ENCODE measurements at regions of chr13 and their contacts with region 1.

Region 1: DNA sequence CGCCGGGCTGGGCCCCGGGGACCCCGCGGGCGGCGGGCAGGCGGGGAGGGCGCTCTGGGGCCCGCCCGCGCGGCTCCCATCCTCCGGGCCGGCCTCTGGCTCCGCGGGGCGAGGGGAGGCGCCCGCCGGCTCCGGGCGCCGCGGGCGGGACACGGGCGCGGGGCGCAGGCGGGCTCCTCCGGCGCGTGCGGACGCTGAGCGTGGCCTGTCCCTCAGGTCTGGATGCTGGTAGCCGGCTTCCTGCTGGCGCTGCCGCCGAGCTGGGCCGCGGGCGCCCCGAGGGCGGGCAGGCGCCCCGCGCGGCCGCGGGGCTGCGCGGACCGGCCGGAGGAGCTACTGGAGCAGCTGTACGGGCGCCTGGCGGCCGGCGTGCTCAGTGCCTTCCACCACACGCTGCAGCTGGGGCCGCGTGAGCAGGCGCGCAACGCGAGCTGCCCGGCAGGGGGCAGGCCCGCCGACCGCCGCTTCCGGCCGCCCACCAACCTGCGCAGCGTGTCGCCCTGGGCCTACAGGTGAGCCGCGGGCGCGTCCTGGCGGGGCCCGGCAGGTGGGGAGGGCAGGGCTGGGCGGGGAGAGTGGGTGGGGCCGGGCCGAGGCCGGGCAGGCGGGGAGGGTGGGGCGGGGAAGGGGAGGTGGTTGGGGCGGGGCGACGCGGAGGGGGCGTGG is 414 bp downstream of the IL17D start:
- DNase-seq: peak; percentile 72
- ATAC-seq: peak; percentile 93
- H3K4me3 Mint-ChIP-seq: no peak overlapping the region
- H3K27ac Mint-ChIP-seq: no peak overlapping the region
- H3K4me1 Mint-ChIP-seq: peaks cover 14% of the 10 kb centered on the region
- H3K27me3 Mint-ChIP-seq: peaks cover 19% of the 10 kb centered on the region
- CTCF ChIP-seq: no peak

Region 2: DNA sequence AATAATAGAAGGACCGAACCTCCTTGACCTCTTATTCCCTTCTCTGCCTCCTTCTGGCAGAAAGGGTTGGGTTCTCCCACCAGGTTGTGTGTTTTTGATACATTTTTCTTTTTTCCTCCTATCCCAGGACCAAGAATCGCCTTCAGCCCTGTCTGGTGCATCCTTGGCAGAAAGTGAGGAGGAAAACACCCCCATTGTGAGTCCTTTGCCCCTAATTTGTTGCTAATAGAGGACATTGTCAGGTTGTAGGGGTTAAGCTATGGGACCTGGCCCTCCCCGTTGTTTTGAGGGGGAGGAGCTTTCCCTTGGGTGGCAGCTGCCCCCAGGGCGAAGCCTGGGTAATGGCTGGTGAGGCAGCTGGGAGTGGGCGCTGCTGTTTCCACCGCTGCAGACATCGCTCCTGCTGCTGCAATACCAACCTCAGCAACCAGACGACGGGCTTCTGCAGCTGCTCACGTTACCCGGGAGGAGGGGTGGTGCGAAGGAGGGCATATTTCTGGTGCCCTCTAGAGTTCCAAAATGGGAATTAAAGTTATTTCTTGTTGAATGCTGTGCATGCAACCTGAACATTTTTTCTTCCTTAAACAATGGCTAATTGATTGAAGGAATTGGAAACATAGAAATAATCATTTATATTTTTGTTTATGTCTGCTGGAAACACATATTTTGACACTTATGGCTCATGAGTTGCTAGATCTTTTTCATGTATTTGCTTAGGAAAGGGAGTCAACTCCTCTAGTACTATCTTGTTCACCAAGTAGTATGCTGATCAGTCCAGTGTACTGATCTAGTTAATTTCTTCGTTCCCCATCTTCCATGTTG is 743.9 kb before region 1 on chr13:
- CTCF ChIA-PET with region 1: no interaction called
- POLR2A ChIA-PET with region 1: no interaction called
- intact Hi-C with region 1: loop called (anchors 10 kb)
- DNase-seq: peak; percentile 60
- ATAC-seq: peak; percentile 43
- H3K4me3 Mint-ChIP-seq: peak overlapping the region; percentile 98
- H3K27ac Mint-ChIP-seq: peak overlapping the region; percentile 98
- H3K4me1 Mint-ChIP-seq: peaks cover 33% of the 10 kb centered on the region
- H3K27me3 Mint-ChIP-seq: no peaks in the 10 kb centered on the region
- CTCF ChIP-seq: no peak

Region 3: GRCh38 chr13:20525690-20526544 is 178.0 kb before region 1 on chr13 and contains the start of gene CRYL1:
- CTCF ChIA-PET with region 1: no interaction called
- POLR2A ChIA-PET with region 1: no interaction called
- intact Hi-C with region 1: loop called (anchors 1 kb)
- DNase-seq: peak; percentile 69
- ATAC-seq: peak; percentile 90
- H3K4me3 Mint-ChIP-seq: peak within 1 kb of the TSS; percentile 87
- H3K27ac Mint-ChIP-seq: peak within 1 kb of the TSS; percentile 79
- H3K4me1 Mint-ChIP-seq: peaks cover 16% of the 10 kb centered on the region
- H3K27me3 Mint-ChIP-seq: no peaks in the 10 kb centered on the region
- CTCF ChIP-seq: no peak
- total RNA-seq, gene CRYL1: 9.2 and 9.6 TPM in 2 replicates

Region 4: DNA sequence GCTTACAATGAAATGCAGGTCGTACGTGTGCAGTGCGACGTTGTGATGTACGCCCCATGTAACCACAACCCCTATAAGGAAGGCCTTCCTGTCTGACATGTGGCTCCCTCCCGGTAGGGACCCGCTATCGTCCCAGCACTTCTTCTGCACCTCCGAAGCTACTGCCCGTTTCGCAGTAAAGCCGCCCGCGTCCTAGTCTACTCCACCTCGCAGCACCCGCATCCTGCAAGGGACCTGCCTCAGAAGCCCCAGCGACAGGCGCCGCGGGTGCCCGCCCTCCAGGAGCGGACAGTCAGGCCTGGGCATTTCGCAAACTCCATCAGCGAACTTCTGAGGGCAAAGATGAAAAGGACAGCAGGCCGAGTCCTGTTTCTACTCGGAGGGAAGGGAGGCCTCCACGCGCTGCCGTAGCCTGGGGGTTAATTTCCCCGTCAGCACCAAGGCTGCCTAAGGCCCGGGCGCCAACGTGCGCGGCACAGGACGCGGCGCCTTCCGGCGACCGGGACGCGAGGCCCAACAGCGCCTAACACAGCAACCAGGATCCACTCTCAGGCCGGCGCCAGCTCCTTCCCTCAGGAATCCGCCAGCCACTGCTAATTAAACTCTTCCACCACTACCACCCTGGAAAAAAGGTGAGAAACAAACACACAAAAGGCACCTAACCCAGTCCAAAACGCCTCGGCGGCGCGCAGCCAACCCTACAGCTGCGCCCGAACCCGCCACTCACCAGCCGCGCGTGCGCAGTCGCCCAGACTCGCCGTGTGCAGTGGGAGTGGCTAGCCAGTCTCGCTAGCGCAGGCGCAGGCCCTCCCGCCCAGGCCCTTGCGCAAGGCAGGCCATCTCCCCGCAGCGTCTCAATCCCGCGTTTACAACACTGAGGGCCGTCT is 69.5 kb after region 1 on chr13 and contains the start of gene EEF1AKMT1:
- CTCF ChIA-PET with region 1: no interaction called
- POLR2A ChIA-PET with region 1: interaction called, 5 read pairs
- intact Hi-C with region 1: loop called (anchors 1 kb)
- DNase-seq: peak; percentile 94
- ATAC-seq: peak; percentile 95
- H3K4me3 Mint-ChIP-seq: peak within 1 kb of the TSS; percentile 98
- H3K27ac Mint-ChIP-seq: peak within 1 kb of the TSS; percentile 99
- H3K4me1 Mint-ChIP-seq: peaks cover 21% of the 10 kb centered on the region
- H3K27me3 Mint-ChIP-seq: no peaks in the 10 kb centered on the region
- CTCF ChIP-seq: no peak
- total RNA-seq, gene EEF1AKMT1: 3.9 and 7.4 TPM in 2 replicates

Region 5: GRCh38 chr13:21670883-21671619 is 967.1 kb after region 1 on chr13 and contains the start of gene FGF9:
- CTCF ChIA-PET with region 1: no interaction called
- POLR2A ChIA-PET with region 1: no interaction called
- intact Hi-C with region 1: loop called (anchors 5 kb)
- DNase-seq: peak; percentile 76
- ATAC-seq: peak; percentile 77
- H3K4me3 Mint-ChIP-seq: peak within 1 kb of the TSS; percentile 85
- H3K27ac Mint-ChIP-seq: peak within 1 kb of the TSS; percentile 61
- H3K4me1 Mint-ChIP-seq: peaks cover 48% of the 10 kb centered on the region
- H3K27me3 Mint-ChIP-seq: peaks cover 43% of the 10 kb centered on the region
- CTCF ChIP-seq: no peak
- total RNA-seq, gene FGF9: 0.22 and 0.49 TPM in 2 replicates